ENCODE measurements at regions of chr10 and their contacts with region 1.

Region 1: GRCh38 chr10:14837757-14838581 is at the starts of genes CDNF, HSPA14 and MSANTD7:
- DNase-seq: peak; percentile 100
- H3K4me3 Mint-ChIP-seq: peak within 1 kb of the TSS; percentile 93
- H3K27ac Mint-ChIP-seq: peak within 1 kb of the TSS; percentile 94
- H3K4me1 Mint-ChIP-seq: peaks cover 21% of the 10 kb centered on the region
- H3K27me3 Mint-ChIP-seq: no peaks in the 10 kb centered on the region
- total RNA-seq, gene CDNF: 1.6 to 1.8 TPM
- total RNA-seq, gene HSPA14: 31.1 to 31.2 TPM
- total RNA-seq, gene MSANTD7: 16.1 to 18.1 TPM

Region 2: GRCh38 chr10:14185316-14186045 is 652.5 kb before region 1 on chr10:
- CTCF ChIA-PET with region 1: no interaction called
- POLR2A ChIA-PET with region 1: interaction called, 10 read pairs
- intact Hi-C with region 1: loop called (anchors 1 kb)
- DNase-seq: peak; percentile 77
- H3K4me3 Mint-ChIP-seq: peak overlapping the region; percentile 74
- H3K27ac Mint-ChIP-seq: peak overlapping the region; percentile 98
- H3K4me1 Mint-ChIP-seq: peaks cover 32% of the 10 kb centered on the region
- H3K27me3 Mint-ChIP-seq: peaks cover 31% of the 10 kb centered on the region

Region 3: DNA sequence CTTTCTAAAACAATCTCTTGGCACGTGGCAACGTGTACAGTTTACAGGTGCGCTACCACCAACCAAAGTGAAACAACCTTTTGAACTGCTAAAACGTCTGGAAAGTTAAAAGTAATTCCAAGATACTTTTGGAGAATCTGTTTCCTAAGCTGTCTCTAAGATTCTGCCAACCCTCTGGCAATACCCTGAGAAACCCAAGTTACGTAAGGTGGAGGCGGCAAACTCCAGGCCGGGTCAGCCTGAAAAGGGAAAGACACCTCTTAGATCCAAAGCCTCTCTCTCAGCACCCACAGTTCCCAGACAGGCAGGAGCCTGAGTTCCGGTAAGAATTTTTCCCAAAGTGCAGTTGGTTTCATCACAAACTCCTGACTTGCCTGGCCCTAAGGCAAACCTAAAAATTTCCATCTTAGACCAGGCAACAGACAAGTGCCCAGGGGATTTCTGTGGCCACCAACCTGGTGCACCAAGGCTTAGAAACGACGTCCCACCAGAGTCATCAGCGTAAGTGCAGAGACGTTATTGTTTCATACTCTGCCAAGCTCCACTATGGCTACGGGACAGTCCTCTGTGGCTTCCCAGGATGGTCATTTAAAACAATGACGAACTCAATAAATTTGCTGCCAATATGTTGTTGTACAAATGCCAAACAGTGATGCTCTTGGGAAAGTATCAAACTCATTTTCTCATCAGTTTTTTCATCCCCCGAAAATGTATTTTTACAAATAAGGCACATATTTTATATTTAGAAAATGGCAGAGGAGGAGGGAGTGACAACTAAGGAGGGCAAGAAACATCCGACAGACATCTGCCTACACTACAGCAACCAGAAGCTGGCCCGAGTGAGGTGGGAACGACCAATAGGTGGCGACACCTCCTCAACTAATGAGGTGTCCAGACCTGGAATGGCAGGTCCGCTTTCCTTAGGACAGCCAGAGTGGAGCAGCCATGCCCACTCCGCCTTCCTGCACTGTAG is 301.4 kb before region 1 on chr10:
- CTCF ChIA-PET with region 1: interaction called, 11 read pairs
- POLR2A ChIA-PET with region 1: interaction called, 3 read pairs
- intact Hi-C with region 1: no loop called
- DNase-seq: peak; percentile 67
- H3K4me3 Mint-ChIP-seq: no peak overlapping the region
- H3K27ac Mint-ChIP-seq: peak overlapping the region; percentile 19
- H3K4me1 Mint-ChIP-seq: peaks cover 83% of the 10 kb centered on the region
- H3K27me3 Mint-ChIP-seq: no peaks in the 10 kb centered on the region

Region 4: DNA sequence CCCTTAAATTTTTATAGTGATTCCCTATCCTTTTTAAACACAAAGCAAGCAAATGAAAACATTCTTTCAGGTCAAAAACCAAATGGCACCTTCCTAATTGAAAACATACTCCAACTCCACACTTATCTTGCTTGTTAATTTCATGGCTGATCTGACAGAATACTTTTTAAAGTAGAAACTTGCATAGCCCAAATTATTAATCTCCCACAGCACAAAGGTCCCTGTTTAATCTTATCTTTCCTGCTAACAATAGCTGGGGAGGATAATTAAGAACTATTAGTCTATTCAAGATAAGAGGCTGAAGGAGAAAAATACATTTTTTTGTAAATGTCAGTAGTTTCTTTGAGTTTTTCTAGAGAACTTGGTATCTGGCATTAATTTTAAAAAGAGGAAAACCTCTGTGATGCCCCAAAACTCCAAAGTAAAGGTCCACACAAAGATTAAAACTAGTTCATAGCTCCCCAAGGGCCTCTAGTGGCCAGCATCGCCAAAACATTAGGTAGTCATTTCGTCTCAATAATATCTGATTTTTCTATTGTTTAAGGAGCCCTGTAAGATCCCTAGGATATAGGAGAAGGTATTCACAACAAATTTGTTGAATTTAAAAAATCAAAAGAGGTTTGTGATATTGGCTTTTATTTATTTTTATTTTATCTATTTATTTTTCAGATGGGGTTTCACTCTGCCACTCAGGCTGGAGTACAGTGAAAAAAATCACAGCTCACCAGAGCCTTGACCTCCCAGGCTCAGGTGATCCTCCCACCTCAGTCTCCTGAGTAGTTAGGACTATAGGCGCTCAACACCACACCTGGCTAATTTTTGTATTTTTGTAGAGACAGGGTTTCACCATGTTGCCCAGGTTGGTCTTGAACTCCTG is 14.9 kb before region 1 on chr10:
- CTCF ChIA-PET with region 1: interaction called, 13 read pairs
- POLR2A ChIA-PET with region 1: interaction called, 3 read pairs
- intact Hi-C with region 1: no loop called
- DNase-seq: peak; percentile 56
- H3K4me3 Mint-ChIP-seq: no peak overlapping the region
- H3K27ac Mint-ChIP-seq: no peak overlapping the region
- H3K4me1 Mint-ChIP-seq: peaks cover 2% of the 10 kb centered on the region
- H3K27me3 Mint-ChIP-seq: peaks cover 1% of the 10 kb centered on the region

Region 5: DNA sequence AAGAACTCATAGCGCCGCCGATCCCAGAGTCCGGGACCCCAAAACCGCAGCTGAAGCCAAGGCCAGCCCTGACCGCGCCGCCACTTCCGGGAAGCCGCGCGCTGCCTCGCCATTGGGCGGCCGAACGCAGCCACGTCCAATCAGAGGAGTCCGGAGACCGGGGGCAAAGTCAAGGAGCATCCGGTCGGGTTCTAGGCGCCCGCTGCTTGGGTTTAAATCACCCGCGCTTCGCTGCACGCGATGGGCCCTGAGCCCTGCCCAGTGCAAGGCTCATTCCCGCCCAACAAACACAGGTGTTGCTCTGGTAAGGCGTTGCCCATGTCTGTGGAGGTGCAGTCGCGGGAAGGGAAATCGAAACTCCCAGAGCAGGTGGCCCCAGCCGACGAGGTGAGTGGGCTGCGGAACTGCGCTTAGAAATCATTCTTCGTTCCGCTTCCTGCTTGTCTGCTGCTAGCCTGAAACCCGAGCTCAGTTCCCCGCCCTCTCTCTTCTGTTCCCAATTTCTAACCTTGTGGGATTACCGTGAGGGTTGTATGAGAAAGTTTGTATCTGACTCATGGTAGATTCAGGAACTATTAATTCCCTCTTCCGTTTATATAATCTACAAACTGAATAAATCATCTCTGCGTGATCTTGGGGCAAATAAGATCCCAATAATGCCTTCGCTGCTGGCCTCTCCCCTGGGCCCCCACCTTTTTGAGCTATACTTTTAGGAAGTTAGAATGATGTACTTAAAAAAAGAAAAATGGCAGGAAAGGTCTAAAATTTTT is 116.2 kb after region 1 on chr10 and contains the start of gene DCLRE1C:
- CTCF ChIA-PET with region 1: interaction called, 4 read pairs
- POLR2A ChIA-PET with region 1: interaction called, 3 read pairs
- intact Hi-C with region 1: loop called (anchors 1 kb)
- DNase-seq: peak; percentile 93
- H3K4me3 Mint-ChIP-seq: peak within 1 kb of the TSS; percentile 91
- H3K27ac Mint-ChIP-seq: peak within 1 kb of the TSS; percentile 96
- H3K4me1 Mint-ChIP-seq: peaks cover 47% of the 10 kb centered on the region
- H3K27me3 Mint-ChIP-seq: no peaks in the 10 kb centered on the region
- total RNA-seq, gene DCLRE1C: 17.2 to 18.3 TPM

Measured in activated CD4-positive, alpha-beta memory T cell treated with anti-CD3 and anti-CD28 coated beads for 36 hours (primary cell).